GM18951 (cell line): ENCODE measurements at regions of chr3 and their contacts with region 1.

Region 1: GRCh38 chr3:13091898-13092611 is 18.8 kb upstream of the IQSEC1 start:
- POLR2A ChIP-seq: no peak

Region 2: GRCh38 chr3:13452490-13453335 is 360.7 kb after region 1 on chr3:
- in situ Hi-C with region 1: loop called (anchors 25 kb)
- POLR2A ChIP-seq: no peak